PC-9 (cell line): ENCODE measurements at regions of chr5 and their contacts with region 1.

Region 1: DNA sequence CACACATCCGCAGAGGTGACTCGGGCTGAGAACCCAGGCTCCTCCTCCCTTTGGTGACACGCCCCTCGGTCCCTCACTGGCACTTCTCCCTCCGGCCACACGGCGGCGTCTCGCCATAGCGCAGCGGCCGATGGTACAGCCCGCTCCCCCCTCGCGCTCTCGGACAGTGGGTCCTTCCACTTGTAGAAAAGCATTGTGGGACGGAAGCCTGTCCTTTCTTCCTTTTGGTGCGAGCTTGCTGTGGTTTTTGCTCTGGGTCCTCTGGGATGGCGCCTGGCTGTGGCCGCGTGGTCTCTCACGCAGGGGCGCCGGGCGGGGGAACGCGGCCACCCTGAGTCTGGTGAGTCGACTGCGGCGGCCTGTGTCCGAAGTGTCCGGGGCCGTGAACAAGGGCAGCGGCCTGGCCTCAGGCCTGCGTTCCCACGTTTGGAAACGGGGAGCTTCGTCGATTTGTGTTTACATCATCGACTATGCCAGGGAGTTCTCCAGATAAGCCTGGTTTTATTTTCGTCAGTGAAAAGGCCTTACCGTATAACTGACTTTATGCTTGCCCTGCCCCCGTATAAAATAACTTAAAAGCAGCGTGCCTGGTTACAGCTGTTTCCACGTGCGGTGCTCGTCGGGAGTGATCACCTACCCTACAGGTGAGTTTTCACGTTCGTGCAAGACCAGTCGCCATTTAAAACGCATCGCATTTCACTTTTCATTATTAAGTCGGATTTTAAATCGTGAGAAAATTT is 258.3 kb downstream of the EPB41L4A start:
- DNase-seq: peak; percentile 71 to 89
- H3K4me3 ChIP-seq: peak overlapping the region; percentile 85
- H3K27ac ChIP-seq: peak overlapping the region; percentile 73
- H3K4me1 ChIP-seq: peaks cover 16% of the 10 kb centered on the region
- H3K27me3 ChIP-seq: no peaks in the 10 kb centered on the region
- CTCF ChIP-seq: peak; percentile 94

Region 2: GRCh38 chr5:112492291-112492690 is 331.5 kb after region 1 on chr5:
- CTCF ChIA-PET with region 1: no interaction called
- POLR2A ChIA-PET with region 1: no interaction called
- intact Hi-C with region 1: loop called (anchors 1 kb)
- DNase-seq: peak in 1 of 2 experiments; percentile 14
- H3K4me3 ChIP-seq: no peak overlapping the region
- H3K27ac ChIP-seq: no peak overlapping the region
- H3K4me1 ChIP-seq: no peaks in the 10 kb centered on the region
- H3K27me3 ChIP-seq: no peaks in the 10 kb centered on the region
- CTCF ChIP-seq: peak; percentile 41; the same call in 1 of the 2 replicates

Region 3: DNA sequence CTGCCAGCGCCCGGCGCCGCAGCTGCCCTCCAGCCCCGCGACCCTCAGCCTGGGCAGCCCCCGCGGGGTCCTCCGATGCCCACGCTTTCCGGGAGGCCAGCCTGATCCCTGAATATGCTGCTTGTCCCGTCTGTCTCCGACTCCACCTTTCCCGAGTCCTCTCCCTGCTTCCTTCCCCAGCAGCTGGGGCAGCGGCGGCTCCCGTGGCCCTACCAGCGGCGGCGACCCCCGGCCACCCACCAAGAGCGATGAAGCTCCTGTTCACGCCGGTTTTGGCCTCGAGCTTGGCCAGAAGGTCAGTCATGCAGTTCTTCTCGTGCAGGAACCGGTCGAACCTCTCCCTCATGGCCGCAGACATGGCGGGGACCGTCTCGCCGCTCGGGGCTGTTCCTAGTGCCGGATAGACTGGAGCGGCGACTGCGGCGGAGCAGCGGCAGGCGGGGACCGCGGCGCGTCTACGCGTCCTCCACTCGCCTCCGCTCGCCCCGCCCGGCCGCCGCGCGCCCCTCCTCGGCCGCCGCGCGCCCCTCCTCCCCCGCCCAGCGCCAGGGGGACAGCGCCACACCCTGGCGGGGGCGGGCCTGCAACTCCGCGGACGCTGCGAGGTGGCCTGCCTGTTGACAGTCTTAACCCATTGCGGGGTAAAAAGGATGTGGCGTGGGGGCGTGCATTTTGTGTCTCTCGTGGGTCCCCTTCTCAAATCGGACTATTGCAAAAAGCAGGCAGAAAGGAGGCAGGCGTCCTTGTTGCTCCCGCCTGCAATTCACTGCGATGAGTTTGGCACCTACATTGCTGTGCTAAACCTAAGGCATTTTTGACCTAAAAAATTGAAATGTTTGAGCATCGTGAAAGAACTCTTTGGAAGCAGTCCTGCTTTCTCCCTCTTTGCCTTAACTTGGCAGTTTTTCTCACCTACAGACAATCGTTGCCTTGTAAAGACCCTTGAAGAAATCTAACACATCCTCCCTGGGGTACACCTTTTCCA is 761.3 kb after region 1 on chr5 and contains the start of gene REEP5:
- CTCF ChIA-PET with region 1: no interaction called
- POLR2A ChIA-PET with region 1: no interaction called
- intact Hi-C with region 1: loop called (anchors 5 kb)
- DNase-seq: peak; percentile 66 to 85
- H3K4me3 ChIP-seq: peak within 1 kb of the TSS; percentile 97
- H3K27ac ChIP-seq: peak within 1 kb of the TSS; percentile 53
- H3K4me1 ChIP-seq: peaks cover 7% of the 10 kb centered on the region; the same call in 1 of the 2 replicates
- H3K27me3 ChIP-seq: no peaks in the 10 kb centered on the region
- CTCF ChIP-seq: peak; percentile 57
- total RNA-seq, gene REEP5: 45.2 and 53.6 TPM in 2 replicates